ENCODE measurements at regions of chr11 and their contacts with region 1.

Region 1: DNA sequence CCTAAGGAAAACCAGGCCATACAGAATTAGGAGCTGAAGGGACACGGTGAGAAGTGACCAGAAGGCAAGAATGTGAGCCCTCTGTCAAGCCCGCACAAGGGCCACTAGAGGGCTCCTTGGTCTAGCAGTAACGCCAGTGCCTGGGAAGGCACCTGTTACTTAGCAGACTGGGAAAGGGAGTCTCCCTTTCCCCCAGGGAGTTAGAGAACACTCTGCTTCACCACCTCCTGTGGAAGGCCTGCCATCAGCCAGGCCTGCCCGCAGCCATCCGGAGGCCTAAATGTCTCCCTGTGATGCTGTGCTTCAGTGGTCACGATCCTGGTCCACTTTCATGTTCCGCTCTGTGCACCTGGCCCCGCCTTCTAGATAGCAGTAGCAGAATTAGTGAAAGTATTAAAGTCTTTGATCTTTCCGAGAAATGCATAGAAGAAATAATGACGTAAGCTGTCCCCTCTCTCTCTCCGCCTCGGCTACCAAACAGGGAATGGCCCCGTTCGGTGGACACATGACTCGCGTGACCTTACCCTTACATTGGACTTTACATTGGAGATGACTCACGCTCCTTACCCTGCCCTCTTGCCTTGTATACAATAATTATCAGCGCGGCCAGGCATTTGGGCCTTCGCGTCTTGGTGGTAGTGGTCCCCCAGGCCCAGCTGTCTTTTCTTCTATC is 10.7 kb upstream of the GSTP1 start:
- DNase-seq: peak; percentile 55
- ATAC-seq: no peak
- H3K4me3 Mint-ChIP-seq: no peak overlapping the region
- H3K27ac Mint-ChIP-seq: no peak overlapping the region
- H3K4me1 Mint-ChIP-seq: no peaks in the 10 kb centered on the region
- H3K27me3 Mint-ChIP-seq: peaks cover 33% of the 10 kb centered on the region

Region 2: GRCh38 chr11:67583247-67584204 is 10.6 kb after region 1 on chr11 and contains the start of gene GSTP1:
- CTCF ChIA-PET with region 1: interaction called, 18 read pairs
- DNase-seq: peak; percentile 87
- ATAC-seq: peak; percentile 95
- H3K4me3 Mint-ChIP-seq: peak within 1 kb of the TSS; percentile 88
- H3K27ac Mint-ChIP-seq: peak within 1 kb of the TSS; percentile 84
- H3K4me1 Mint-ChIP-seq: peaks cover 49% of the 10 kb centered on the region
- H3K27me3 Mint-ChIP-seq: peaks cover 31% of the 10 kb centered on the region
- total RNA-seq, gene GSTP1: 339 to 406 TPM